ENCODE measurements at regions of chr1 and their contacts with region 1.

Region 1: GRCh38 chr1:115138968-115139367 is 49.7 kb upstream of the TSPAN2 start:
- DNase-seq: peak; percentile 89
- ATAC-seq: peak; percentile 94 to 96
- H3K4me3 ChIP-seq: no peak overlapping the region
- H3K27ac ChIP-seq: no peak overlapping the region
- H3K4me1 ChIP-seq: no peaks in the 10 kb centered on the region
- H3K27me3 ChIP-seq: no peaks in the 10 kb centered on the region
- CTCF ChIP-seq: peak; percentile 84

Region 2: GRCh38 chr1:115595279-115596079 is 456.5 kb after region 1 on chr1:
- intact Hi-C with region 1: loop called (anchors 10 kb)
- DNase-seq: peak; percentile 77
- ATAC-seq: peak; percentile 88 to 93
- H3K4me3 ChIP-seq: no peak overlapping the region
- H3K27ac ChIP-seq: no peak overlapping the region
- H3K4me1 ChIP-seq: no peaks in the 10 kb centered on the region
- H3K27me3 ChIP-seq: no peaks in the 10 kb centered on the region
- CTCF ChIP-seq: peak; percentile 88